Motor neuron (in vitro differentiated cells): ENCODE measurements at regions of chr9 and their contacts with region 1.

Region 1: GRCh38 chr9:98860871-98861293 is 53.4 kb downstream of the GALNT12 start:
- ATAC-seq: peak in 4 of 8 experiments; percentile 58 to 98 (median 82)
- H3K4me3 ChIP-seq: no peak overlapping the region
- H3K27ac ChIP-seq: no peak overlapping the region
- H3K4me1 ChIP-seq: no peaks in the 10 kb centered on the region

Region 2: GRCh38 chr9:98974994-98975712 is 114.3 kb after region 1 on chr9:
- in situ Hi-C with region 1: loop called in 2 of 9 experiments (anchors 25 kb)
- ATAC-seq: peak; percentile 64 to 94 (median 79)
- H3K4me3 ChIP-seq: peak overlapping the region; percentile 13 to 29 (median 21)
- H3K27ac ChIP-seq: no peak overlapping the region
- H3K4me1 ChIP-seq: peaks cover 7 to 16% of the 10 kb centered on the region in 2 donors

Region 3: GRCh38 chr9:99130069-99130468 is 269.2 kb after region 1 on chr9:
- in situ Hi-C with region 1: loop called in 3 of 9 experiments (anchors 10 to 25 kb)
- ATAC-seq: no peak
- H3K4me3 ChIP-seq: no peak overlapping the region
- H3K27ac ChIP-seq: no peak overlapping the region
- H3K4me1 ChIP-seq: peaks cover 0 to 7% of the 10 kb centered on the region in 2 donors

Region 4: DNA sequence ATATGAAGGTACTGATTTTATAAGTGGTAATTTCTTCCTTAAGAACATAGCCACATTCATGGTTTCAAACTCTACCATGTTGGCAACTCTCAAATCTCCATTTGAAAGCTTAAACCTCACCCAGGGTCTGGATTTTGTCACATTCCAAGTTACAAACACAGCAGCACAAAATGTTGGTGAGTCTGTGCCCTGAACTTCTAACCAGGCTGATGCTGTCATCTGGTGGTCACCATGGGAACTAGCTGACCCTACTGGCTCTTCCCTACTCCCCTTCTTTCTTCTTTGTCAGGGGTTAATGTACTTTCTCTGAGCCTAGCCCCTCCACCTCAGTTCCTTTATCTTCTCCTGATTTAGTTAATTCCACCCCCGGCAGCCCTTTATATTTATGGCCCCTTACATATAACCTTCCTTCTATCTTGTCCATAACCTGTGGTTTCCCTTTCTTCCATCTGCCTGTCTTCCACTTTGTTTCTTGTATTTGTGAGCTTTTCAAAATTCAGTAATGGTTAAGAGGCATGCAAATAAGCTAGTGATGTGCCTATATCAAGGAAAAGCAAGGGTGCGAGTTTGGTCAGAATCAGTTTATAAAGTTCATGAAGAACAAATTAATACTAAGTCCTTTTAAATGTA is 279.9 kb after region 1 on chr9:
- in situ Hi-C with region 1: loop called in 3 of 9 experiments (anchors 10 to 25 kb)
- ATAC-seq: peak in 5 of 8 experiments; percentile 40 to 91 (median 87)
- H3K4me3 ChIP-seq: no peak overlapping the region
- H3K27ac ChIP-seq: no peak overlapping the region
- H3K4me1 ChIP-seq: no peaks in the 10 kb centered on the region